Spleen (tissue), 13 donors: ENCODE measurements at regions of chr1 and their contacts with region 1.

Region 1: GRCh38 chr1:12275369-12275768 is 45.5 kb downstream of the VPS13D start:
- DNase-seq: no peak
- H3K4me3 ChIP-seq: no peak overlapping the region
- H3K27ac ChIP-seq: no peak overlapping the region
- H3K4me1 ChIP-seq: peaks cover 0 to 7% (median 0%) of the 10 kb centered on the region in 6 donors
- H3K27me3 ChIP-seq: no peaks in the 10 kb centered on the region
- CTCF ChIP-seq: peak in 10 of 11 experiments; percentile 10 to 75 (median 55)
- POLR2A ChIP-seq: no peak

Region 2: DNA sequence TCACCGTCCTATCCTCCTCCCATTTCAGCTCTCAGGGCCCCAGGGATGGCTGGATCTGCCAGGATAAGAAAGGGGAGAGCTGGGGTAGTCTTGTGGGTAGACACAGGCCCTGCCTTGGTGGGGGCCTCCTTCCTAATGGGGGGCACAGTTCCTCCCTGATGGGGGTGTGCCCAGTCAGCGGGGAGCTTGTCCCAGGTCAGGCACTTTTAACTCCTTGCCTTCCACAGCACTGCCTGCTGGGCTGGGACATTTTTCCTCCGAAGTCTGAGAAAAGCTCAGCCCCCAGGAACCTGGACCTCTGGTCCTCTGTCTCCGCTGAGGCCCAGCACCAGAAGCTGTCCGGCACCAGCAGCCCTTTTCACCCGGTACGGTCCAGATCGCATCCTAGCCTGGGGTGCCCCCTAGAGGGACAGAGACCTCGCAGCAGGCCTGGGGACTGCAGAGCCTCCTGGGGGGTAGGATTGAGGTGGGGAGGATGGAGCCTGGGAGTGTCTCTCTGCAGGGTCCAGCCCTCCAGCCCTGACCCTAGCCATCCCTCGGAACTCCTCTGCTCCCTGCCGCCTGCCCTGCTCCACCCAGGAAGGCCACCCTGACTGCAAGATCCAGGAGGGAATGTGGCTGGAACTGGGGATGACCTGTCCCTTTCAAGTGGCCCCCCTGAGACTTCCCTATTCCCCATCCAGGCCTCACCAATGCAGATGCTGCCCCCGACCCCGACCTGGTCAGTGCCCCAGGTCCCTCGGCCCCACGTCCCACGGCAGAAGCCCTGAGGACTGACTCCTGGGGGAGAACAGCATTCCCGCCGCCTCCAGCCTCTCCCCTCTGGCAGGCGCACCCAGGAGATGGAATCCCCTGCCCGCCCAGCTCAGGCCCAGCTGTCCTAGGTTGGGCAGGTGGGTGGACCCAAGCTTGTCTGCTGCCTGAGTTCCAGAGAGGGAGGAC is 244.1 kb before region 1 on chr1:
- intact Hi-C with region 1: no loop called
- DNase-seq: no peak
- H3K4me3 ChIP-seq: no peak overlapping the region
- H3K27ac ChIP-seq: peak overlapping the region in 1 of 8 donors; percentile 21
- H3K4me1 ChIP-seq: peaks cover 0 to 29% (median 4%) of the 10 kb centered on the region in 6 donors
- H3K27me3 ChIP-seq: no peaks in the 10 kb centered on the region
- CTCF ChIP-seq: peak in 10 of 11 experiments; percentile 13 to 75 (median 47)
- POLR2A ChIP-seq: no peak

Region 3: DNA sequence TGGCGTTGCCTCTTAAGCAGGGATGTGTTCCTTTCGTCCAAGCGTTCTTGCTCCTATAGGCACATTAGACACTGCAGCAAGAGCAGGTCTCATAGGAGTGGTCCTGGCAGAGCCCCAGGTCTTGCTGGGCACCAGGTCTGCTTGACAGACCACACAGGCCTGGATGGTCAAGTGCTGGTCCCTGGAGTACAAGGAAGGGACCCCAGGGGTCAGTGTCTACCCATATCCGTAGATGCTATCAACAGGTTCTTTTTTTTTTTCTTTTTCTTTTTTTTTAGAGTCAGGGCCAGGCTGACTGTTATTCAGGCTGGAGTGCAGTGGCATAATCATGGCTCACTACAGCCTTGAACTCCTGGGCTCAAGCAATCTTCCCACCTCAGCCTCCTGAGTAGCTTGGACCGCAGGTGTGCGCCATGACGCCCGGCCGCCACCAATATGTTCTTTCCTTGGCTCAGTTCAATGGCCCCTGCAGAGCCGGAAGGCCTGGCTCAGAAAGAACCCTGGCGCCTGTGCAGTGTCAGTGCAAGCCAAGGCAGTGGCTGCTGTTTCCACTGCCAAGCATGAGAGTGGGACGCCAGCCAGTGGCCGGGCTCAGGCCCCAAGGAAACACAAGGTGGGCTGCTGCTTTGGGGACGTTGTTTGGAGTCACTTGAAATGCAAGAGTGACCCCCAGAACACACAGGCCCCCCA is 222.2 kb before region 1 on chr1:
- intact Hi-C with region 1: no loop called
- DNase-seq: peak; percentile 65
- H3K4me3 ChIP-seq: no peak overlapping the region
- H3K27ac ChIP-seq: no peak overlapping the region
- H3K4me1 ChIP-seq: peaks cover 0 to 18% (median 10%) of the 10 kb centered on the region in 6 donors
- H3K27me3 ChIP-seq: peaks cover 0 to 2% (median 0%) of the 10 kb centered on the region in 7 donors
- CTCF ChIP-seq: no peak
- POLR2A ChIP-seq: no peak

Region 4: DNA sequence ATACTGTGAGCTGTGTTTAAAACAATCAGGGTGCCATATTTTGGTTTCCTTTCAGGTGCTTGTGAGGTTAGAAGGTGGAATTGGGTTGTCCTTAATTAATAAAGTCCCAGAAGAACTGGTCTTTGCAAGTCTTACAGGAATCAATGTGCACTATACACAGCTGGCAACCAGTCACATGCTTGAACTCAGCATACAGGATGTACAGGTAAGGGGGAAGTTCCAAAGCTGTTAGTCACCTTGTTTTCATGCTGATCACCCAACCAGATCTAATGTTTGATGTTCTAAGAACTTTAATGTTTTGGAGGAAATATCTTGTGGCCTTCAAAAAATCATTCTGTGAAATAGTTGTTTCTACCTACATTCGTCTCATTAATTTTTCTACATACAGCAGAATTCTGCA is 110.8 kb after region 1 on chr1:
- intact Hi-C with region 1: loop called (anchors 10 kb)
- DNase-seq: no peak
- H3K4me3 ChIP-seq: no peak overlapping the region
- H3K27ac ChIP-seq: peak overlapping the region in 3 of 8 donors; percentile 13 to 67 (median 42)
- H3K4me1 ChIP-seq: peaks cover 0 to 28% (median 16%) of the 10 kb centered on the region in 6 donors
- H3K27me3 ChIP-seq: no peaks in the 10 kb centered on the region
- CTCF ChIP-seq: no peak
- POLR2A ChIP-seq: no peak

Region 5: GRCh38 chr1:12658531-12659453 is 383.4 kb after region 1 on chr1:
- intact Hi-C with region 1: loop called (anchors 10 kb)
- DNase-seq: peak; percentile 83
- H3K4me3 ChIP-seq: no peak overlapping the region
- H3K27ac ChIP-seq: no peak overlapping the region
- H3K4me1 ChIP-seq: peaks cover 0 to 14% (median 4%) of the 10 kb centered on the region in 6 donors
- H3K27me3 ChIP-seq: peaks cover 0 to 7% (median 0%) of the 10 kb centered on the region in 7 donors
- CTCF ChIP-seq: peak; percentile 83 to 96 (median 93)
- POLR2A ChIP-seq: no peak